Mammary epithelial cell (primary cell): ENCODE measurements at regions of chr1 and their contacts with region 1.

Region 1: GRCh38 chr1:28296401-28297261 is 32.2 kb upstream of the MED18 start:
- DNase-seq: no peak
- H3K4me3 ChIP-seq: no peak overlapping the region
- H3K27ac ChIP-seq: no peak overlapping the region
- H3K4me1 ChIP-seq: peaks cover 6% of the 10 kb centered on the region
- H3K27me3 ChIP-seq: no peaks in the 10 kb centered on the region
- CTCF ChIP-seq: no peak

Region 2: GRCh38 chr1:26645734-26646133 is 1650.9 kb before region 1 on chr1:
- CTCF ChIA-PET with region 1: no interaction called
- dilution Hi-C with region 1: no loop called
- in situ Hi-C with region 1: no loop called
- intact Hi-C with region 1: no loop called
- DNase-seq: no peak
- H3K4me3 ChIP-seq: no peak overlapping the region
- H3K27ac ChIP-seq: no peak overlapping the region
- H3K4me1 ChIP-seq: no peaks in the 10 kb centered on the region
- H3K27me3 ChIP-seq: no peaks in the 10 kb centered on the region
- CTCF ChIP-seq: no peak

Region 3: GRCh38 chr1:28235755-28236655 is 60.6 kb before region 1 on chr1 and contains the start of gene ATP5IF1:
- CTCF ChIA-PET with region 1: no interaction called
- dilution Hi-C with region 1: no loop called
- in situ Hi-C with region 1: no loop called
- intact Hi-C with region 1: no loop called
- DNase-seq: peak; percentile 97
- H3K4me3 ChIP-seq: peak within 1 kb of the TSS; percentile 64 to 87 (median 70)
- H3K27ac ChIP-seq: peak within 1 kb of the TSS; percentile 45
- H3K4me1 ChIP-seq: peaks cover 27% of the 10 kb centered on the region
- H3K27me3 ChIP-seq: no peaks in the 10 kb centered on the region
- CTCF ChIP-seq: no peak
- total RNA-seq, gene ATP5IF1: 114 to 244 TPM

Region 4: DNA sequence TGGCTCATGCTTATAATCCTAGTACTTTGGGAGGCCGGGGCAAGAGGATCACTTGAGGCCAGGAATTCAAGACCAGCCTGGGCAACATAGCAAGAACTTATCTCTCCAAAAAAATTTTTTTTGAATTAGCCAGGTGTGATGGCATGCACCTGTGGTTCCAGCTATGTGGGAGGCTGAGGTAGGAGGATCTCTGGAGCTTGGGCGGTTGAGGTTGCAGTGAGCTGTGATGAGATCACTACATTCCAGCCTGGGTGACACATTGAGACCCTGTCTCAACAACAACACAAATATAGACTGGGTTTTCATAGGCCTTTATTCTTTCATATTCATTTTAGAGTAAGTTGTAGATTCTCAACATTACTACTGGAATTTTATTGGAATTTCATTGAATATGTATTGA is 45.0 kb after region 1 on chr1:
- CTCF ChIA-PET with region 1: no interaction called
- dilution Hi-C with region 1: loop called (anchors 5 kb)
- in situ Hi-C with region 1: no loop called
- intact Hi-C with region 1: no loop called
- DNase-seq: peak; percentile 74
- H3K4me3 ChIP-seq: no peak overlapping the region
- H3K27ac ChIP-seq: peak overlapping the region; percentile 53
- H3K4me1 ChIP-seq: peaks cover 19% of the 10 kb centered on the region
- H3K27me3 ChIP-seq: no peaks in the 10 kb centered on the region
- CTCF ChIP-seq: no peak

Region 5: DNA sequence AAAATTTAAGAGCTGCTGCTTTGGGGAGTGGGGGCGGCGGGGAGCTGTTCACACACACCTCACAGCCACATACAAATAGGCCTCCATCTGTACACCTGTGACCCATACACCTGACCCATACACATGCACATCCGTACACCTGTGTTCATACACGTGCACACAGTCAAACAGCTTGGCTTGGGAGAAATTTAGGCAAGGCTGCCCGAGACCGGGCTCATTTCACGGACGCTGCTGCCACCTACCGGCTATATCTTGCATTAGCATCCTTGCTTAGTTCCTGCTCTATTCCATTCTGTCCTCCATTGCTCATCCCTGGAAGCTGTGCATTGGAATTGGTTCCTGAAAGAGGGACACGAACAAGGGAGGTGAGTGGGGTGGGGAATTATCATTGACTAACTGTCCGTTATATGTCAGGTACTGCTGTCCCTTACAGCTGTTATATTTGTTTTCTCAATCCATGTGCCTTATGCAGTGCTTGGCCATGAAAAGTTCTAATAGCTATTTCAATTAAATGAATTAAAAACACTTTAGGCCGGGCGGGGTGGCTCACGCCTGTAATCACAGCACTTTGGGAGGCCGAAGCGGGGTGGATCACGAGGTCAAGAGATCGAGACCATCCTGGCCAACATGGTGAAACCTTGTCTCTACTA is 580.6 kb after region 1 on chr1:
- CTCF ChIA-PET with region 1: no interaction called
- dilution Hi-C with region 1: no loop called
- in situ Hi-C with region 1: no loop called
- intact Hi-C with region 1: no loop called
- DNase-seq: peak; percentile 72
- H3K4me3 ChIP-seq: no peak overlapping the region
- H3K27ac ChIP-seq: no peak overlapping the region
- H3K4me1 ChIP-seq: peaks cover 6% of the 10 kb centered on the region
- H3K27me3 ChIP-seq: no peaks in the 10 kb centered on the region
- CTCF ChIP-seq: peak; percentile 91 to 94